ENCODE measurements at regions of chr1 and their contacts with region 1.

Region 1: DNA sequence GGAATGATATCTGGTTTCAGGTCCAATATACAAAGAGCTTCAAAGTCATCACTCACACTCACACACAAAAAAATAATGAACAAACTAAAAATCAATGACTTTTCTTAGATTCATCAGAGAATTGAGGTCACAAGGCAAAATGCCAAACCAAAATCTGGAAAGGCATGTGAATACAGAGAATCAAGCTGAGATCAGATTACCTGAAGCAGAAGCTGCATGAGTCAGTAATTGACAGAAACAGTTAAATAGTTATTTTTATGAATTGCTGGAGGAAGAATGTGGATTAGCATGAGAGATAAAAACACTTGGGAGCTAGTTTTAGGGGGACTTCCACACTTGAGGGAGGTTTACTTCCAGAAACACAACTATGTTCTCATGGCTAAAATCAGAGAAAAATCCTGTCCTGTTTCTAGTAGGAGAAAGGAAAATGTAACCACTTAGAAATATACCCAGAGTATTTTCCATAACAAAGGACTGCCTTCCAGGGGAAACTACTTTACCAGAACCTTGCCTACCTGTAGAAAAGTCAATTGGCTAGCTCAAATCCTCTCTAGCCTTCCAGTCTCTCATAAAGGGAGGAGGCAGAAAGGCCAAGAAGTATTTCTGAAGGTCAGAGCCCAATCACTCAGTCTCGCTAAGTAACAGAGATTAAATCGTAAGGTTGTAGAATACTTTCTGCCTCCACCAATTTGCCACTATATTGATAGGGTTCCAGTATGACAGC is 536.5 kb upstream of the NR5A2 start:
- DNase-seq: no peak
- ATAC-seq: no peak
- H3K4me3 Mint-ChIP-seq: no peak overlapping the region
- H3K27ac Mint-ChIP-seq: peak overlapping the region; percentile 60
- H3K4me1 Mint-ChIP-seq: peaks cover 36% of the 10 kb centered on the region
- H3K27me3 Mint-ChIP-seq: no peaks in the 10 kb centered on the region
- CTCF ChIP-seq: no peak

Region 2: DNA sequence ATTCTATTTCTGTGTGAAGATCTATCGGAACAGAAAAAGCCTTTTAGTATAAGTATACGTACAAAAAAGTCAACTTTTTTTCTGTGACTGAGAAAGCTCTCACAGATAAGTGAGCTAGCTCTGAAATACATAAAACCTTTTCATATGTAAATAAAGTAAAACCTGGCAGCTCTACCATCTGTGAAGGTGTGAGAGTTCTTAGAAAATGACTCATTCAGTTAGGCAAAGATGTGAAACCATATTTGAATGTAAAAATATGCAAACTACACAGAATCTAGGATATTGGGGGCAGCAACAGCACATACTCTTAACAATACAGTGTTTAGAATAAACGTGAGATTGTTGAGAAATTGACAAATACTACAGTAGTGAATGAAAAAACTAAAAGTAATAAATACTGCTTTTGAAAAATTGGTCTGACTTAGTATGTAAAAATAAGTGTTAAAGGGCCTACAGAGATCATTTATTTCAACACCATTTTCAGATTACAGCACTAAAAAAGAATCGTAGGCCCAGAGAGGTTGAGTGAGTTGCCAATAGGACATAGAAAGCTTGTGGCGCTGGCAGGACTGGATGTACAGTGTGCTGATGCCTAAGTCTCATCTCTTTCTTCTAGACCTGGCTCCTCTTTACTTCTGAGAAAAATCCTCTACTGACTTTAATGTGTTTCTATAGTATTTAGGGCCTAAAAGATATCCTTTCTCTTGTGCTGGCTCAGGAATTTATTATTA is 970.3 kb before region 1 on chr1:
- CTCF ChIA-PET with region 1: no interaction called
- POLR2A ChIA-PET with region 1: no interaction called
- intact Hi-C with region 1: no loop called
- DNase-seq: no peak
- ATAC-seq: peak; percentile 70
- H3K4me3 Mint-ChIP-seq: peak overlapping the region; percentile 69
- H3K27ac Mint-ChIP-seq: peak overlapping the region; percentile 81
- H3K4me1 Mint-ChIP-seq: peaks cover 63% of the 10 kb centered on the region
- H3K27me3 Mint-ChIP-seq: no peaks in the 10 kb centered on the region
- CTCF ChIP-seq: no peak

Region 3: DNA sequence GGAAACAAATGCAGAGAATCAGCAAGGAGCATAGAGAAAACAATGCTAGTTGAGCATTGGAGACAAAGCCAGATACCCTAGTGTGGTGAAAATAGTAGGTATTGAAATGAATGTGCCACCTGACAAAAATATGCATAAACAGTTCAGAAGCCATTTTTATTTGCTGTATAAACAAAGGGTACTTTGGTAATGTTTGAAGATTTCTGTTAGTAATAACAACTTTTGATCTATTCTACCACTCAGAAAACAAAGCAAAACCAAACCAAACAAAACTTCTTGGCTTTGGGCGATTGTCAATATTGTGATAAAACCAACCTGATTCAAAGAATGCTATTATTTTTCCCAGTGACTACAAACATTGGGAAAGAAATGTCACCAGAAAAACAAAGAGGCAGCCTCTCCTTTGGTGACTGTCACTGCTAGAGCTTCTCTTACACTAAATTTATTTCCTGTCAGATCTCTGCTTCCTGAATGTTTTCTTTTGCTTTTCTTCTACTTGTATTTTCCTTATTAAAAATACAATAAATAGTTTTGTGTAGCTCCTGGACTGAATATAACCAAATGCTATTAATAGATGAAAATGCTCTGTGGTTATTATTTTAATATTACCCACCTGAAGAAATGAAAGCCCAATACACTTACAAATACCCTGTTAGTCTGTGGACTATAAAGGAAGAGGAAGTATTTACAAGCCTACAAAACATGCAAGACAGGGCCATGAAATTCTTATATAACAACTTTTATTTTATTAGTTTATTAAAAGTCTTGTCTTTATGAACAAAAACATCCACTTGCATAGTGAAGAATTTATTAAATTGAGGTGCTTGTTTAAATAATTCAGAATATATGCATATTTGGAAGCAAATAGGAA is 956.2 kb before region 1 on chr1:
- CTCF ChIA-PET with region 1: no interaction called
- POLR2A ChIA-PET with region 1: no interaction called
- intact Hi-C with region 1: loop called (anchors 10 kb)
- DNase-seq: no peak
- ATAC-seq: peak; percentile 56
- H3K4me3 Mint-ChIP-seq: peak overlapping the region; percentile 55
- H3K27ac Mint-ChIP-seq: peak overlapping the region; percentile 80
- H3K4me1 Mint-ChIP-seq: peaks cover 84% of the 10 kb centered on the region
- H3K27me3 Mint-ChIP-seq: no peaks in the 10 kb centered on the region
- CTCF ChIP-seq: no peak

Region 4: GRCh38 chr1:198903203-198903602 is 587.8 kb before region 1 on chr1:
- CTCF ChIA-PET with region 1: no interaction called
- POLR2A ChIA-PET with region 1: no interaction called
- intact Hi-C with region 1: no loop called
- DNase-seq: no peak
- ATAC-seq: no peak
- H3K4me3 Mint-ChIP-seq: no peak overlapping the region
- H3K27ac Mint-ChIP-seq: no peak overlapping the region
- H3K4me1 Mint-ChIP-seq: peaks cover 13% of the 10 kb centered on the region
- H3K27me3 Mint-ChIP-seq: no peaks in the 10 kb centered on the region
- CTCF ChIP-seq: no peak

Region 5: DNA sequence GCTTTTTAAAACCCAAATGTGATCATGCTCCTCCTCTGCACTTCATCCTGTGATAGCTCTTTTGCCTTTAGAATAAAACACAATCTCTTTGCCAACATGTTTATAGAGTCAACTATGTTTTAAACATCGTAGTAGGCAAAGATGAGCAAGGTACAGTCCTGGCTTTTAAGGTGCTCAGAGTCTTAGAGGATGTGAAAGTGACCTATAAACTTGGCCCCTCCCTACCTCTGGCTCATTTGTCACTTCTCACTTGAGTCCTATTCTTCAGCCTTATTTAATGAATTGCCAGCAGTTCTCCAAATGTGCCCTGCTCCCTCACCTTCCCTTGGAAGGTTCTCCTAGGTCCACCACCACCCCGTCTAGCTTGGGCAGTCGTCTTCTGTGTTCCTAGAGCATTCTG is 80.5 kb before region 1 on chr1:
- CTCF ChIA-PET with region 1: no interaction called
- POLR2A ChIA-PET with region 1: no interaction called
- intact Hi-C with region 1: loop called (anchors 5 kb)
- DNase-seq: no peak
- ATAC-seq: peak; percentile 77
- H3K4me3 Mint-ChIP-seq: no peak overlapping the region
- H3K27ac Mint-ChIP-seq: no peak overlapping the region
- H3K4me1 Mint-ChIP-seq: peaks cover 30% of the 10 kb centered on the region
- H3K27me3 Mint-ChIP-seq: no peaks in the 10 kb centered on the region
- CTCF ChIP-seq: no peak

Region 6: GRCh38 chr1:199502830-199503229 is 11.9 kb after region 1 on chr1:
- CTCF ChIA-PET with region 1: no interaction called
- POLR2A ChIA-PET with region 1: interaction called, 7 read pairs
- intact Hi-C with region 1: loop called (anchors 1 kb)
- DNase-seq: no peak
- ATAC-seq: no peak
- H3K4me3 Mint-ChIP-seq: no peak overlapping the region
- H3K27ac Mint-ChIP-seq: no peak overlapping the region
- H3K4me1 Mint-ChIP-seq: peaks cover 34% of the 10 kb centered on the region
- H3K27me3 Mint-ChIP-seq: no peaks in the 10 kb centered on the region
- CTCF ChIP-seq: no peak

Region 7: GRCh38 chr1:199684686-199685273 is 193.8 kb after region 1 on chr1:
- CTCF ChIA-PET with region 1: no interaction called
- POLR2A ChIA-PET with region 1: no interaction called
- intact Hi-C with region 1: no loop called
- DNase-seq: no peak
- ATAC-seq: peak; percentile 71
- H3K4me3 Mint-ChIP-seq: no peak overlapping the region
- H3K27ac Mint-ChIP-seq: no peak overlapping the region
- H3K4me1 Mint-ChIP-seq: no peaks in the 10 kb centered on the region
- H3K27me3 Mint-ChIP-seq: peaks cover 6% of the 10 kb centered on the region
- CTCF ChIP-seq: peak; percentile 61

Region 8: GRCh38 chr1:200154069-200154767 is 663.3 kb after region 1 on chr1:
- CTCF ChIA-PET with region 1: no interaction called
- POLR2A ChIA-PET with region 1: no interaction called
- intact Hi-C with region 1: loop called (anchors 5 kb)
- DNase-seq: peak; percentile 23
- ATAC-seq: peak; percentile 87
- H3K4me3 Mint-ChIP-seq: peak overlapping the region; percentile 61
- H3K27ac Mint-ChIP-seq: peak overlapping the region; percentile 92
- H3K4me1 Mint-ChIP-seq: peaks cover 55% of the 10 kb centered on the region
- H3K27me3 Mint-ChIP-seq: no peaks in the 10 kb centered on the region
- CTCF ChIP-seq: no peak

Region 9: GRCh38 chr1:200866521-200866920 is 1375.6 kb after region 1 on chr1:
- CTCF ChIA-PET with region 1: no interaction called
- POLR2A ChIA-PET with region 1: no interaction called
- intact Hi-C with region 1: no loop called
- DNase-seq: no peak
- ATAC-seq: peak; percentile 67
- H3K4me3 Mint-ChIP-seq: no peak overlapping the region
- H3K27ac Mint-ChIP-seq: no peak overlapping the region
- H3K4me1 Mint-ChIP-seq: peaks cover 64% of the 10 kb centered on the region
- H3K27me3 Mint-ChIP-seq: peaks cover 3% of the 10 kb centered on the region
- CTCF ChIP-seq: no peak

Measured in activated B cell treated with CpG ODN at 0.5 μM for 24 hours (primary cell).